CD8-positive, alpha-beta T cell (primary cell): ENCODE measurements at regions of chrX and their contacts with region 1.

Region 1: GRCh38 chrX:48911412-48912182 is at the start of gene SLC35A2:
- DNase-seq: peak; percentile 75 to 92 (median 89)
- ATAC-seq: peak; percentile 77
- H3K4me3 ChIP-seq: peak within 1 kb of the TSS; percentile 66 to 74
- H3K4me3 Mint-ChIP-seq: peak within 1 kb of the TSS; percentile 95
- H3K27ac ChIP-seq: peak within 1 kb of the TSS; percentile 89 to 92
- H3K27ac Mint-ChIP-seq: peak within 1 kb of the TSS; percentile 97
- H3K4me1 ChIP-seq: peaks cover 48% of the 10 kb centered on the region
- H3K4me1 Mint-ChIP-seq: peaks cover 51% of the 10 kb centered on the region
- H3K27me3 ChIP-seq: no peaks in the 10 kb centered on the region
- H3K27me3 Mint-ChIP-seq: no peaks in the 10 kb centered on the region
- CTCF ChIP-seq: no peak
- total RNA-seq, gene SLC35A2: 14.6 to 16.6 TPM

Region 2: GRCh38 chrX:48696301-48697181 is 215.1 kb before region 1 on chrX and contains the start of gene SUV39H1:
- CTCF ChIA-PET with region 1: no interaction called
- POLR2A ChIA-PET with region 1: no interaction called
- intact Hi-C with region 1: loop called in 1 of 2 experiments (anchors 5 kb)
- DNase-seq: peak; percentile 67 to 94 (median 79)
- ATAC-seq: peak; percentile 93
- H3K4me3 ChIP-seq: peak within 1 kb of the TSS; percentile 63 to 72
- H3K4me3 Mint-ChIP-seq: peak within 1 kb of the TSS; percentile 89
- H3K27ac ChIP-seq: peak within 1 kb of the TSS; percentile 85 to 87
- H3K27ac Mint-ChIP-seq: peak within 1 kb of the TSS; percentile 98
- H3K4me1 ChIP-seq: peaks cover 15% of the 10 kb centered on the region
- H3K4me1 Mint-ChIP-seq: peaks cover 27% of the 10 kb centered on the region
- H3K27me3 ChIP-seq: no peaks in the 10 kb centered on the region
- H3K27me3 Mint-ChIP-seq: no peaks in the 10 kb centered on the region
- CTCF ChIP-seq: no peak
- total RNA-seq, gene SUV39H1: 8.2 to 8.6 TPM

Region 3: DNA sequence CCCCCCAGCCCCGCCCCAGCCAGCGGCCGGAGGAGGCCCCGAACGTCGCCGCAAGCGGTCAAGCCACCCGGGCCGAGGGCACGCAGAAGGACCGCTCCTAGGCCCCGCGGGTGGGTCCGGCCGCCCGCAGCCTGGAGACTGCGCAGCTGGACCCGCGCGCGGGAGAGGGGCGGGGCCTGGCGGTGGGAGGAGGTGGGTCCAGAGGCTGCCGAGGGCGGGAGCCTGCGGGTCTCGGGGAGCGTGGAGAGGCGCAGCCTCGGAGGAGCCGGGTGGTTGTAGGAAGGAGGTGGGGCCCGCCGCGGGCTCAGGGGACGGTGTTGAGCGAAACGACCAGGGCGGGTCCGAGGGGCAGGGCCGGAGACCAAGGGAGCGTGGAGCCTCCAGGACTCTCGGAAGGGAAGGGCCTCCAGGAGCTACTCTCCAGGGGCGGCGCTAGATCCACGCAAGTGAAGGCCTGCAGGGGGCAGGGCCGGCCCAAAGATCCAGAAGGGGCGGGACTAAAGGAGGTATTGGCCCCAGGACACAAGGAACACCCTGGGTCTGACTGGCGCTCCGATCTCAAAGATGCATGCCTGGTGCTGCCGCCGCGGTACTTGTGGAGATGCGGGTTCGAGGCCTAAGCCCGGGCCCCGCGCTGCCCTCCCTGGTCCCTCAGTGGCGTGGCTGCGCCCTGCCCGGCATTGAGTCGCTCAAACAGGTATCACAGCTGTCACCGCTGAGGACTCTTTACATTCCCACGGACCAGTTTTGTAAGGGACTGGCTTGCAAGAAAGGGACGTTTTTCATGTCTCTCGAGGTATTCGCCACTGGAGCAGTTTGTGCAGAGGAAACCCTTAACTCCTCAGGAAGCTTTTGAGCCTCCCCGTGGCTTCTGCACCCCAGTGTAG is 20.0 kb before region 1 on chrX:
- CTCF ChIA-PET with region 1: interaction called, 5 read pairs
- POLR2A ChIA-PET with region 1: interaction called, 10 read pairs
- intact Hi-C with region 1: loop called in 1 of 2 experiments (anchors 1 kb)
- DNase-seq: peak; percentile 46 to 88 (median 75)
- ATAC-seq: peak; percentile 87
- H3K4me3 ChIP-seq: peak overlapping the region; percentile 56 to 59
- H3K4me3 Mint-ChIP-seq: peak overlapping the region; percentile 89
- H3K27ac ChIP-seq: peak overlapping the region; percentile 31 to 40
- H3K27ac Mint-ChIP-seq: peak overlapping the region; percentile 27
- H3K4me1 ChIP-seq: peaks cover 14% of the 10 kb centered on the region
- H3K4me1 Mint-ChIP-seq: peaks cover 29% of the 10 kb centered on the region
- H3K27me3 ChIP-seq: no peaks in the 10 kb centered on the region
- H3K27me3 Mint-ChIP-seq: no peaks in the 10 kb centered on the region
- CTCF ChIP-seq: peak; percentile 51

Region 4: GRCh38 chrX:48937054-48937907 is 25.7 kb after region 1 on chrX:
- CTCF ChIA-PET with region 1: interaction called, 7 read pairs
- POLR2A ChIA-PET with region 1: interaction called, 28 read pairs
- intact Hi-C with region 1: no loop called
- DNase-seq: peak; percentile 79 to 95 (median 89)
- ATAC-seq: peak; percentile 67
- H3K4me3 ChIP-seq: peak overlapping the region; percentile 33 to 45
- H3K4me3 Mint-ChIP-seq: peak overlapping the region; percentile 83
- H3K27ac ChIP-seq: peak overlapping the region; percentile 82 to 89
- H3K27ac Mint-ChIP-seq: peak overlapping the region; percentile 99
- H3K4me1 ChIP-seq: peaks cover 81% of the 10 kb centered on the region
- H3K4me1 Mint-ChIP-seq: peaks cover 76% of the 10 kb centered on the region
- H3K27me3 ChIP-seq: no peaks in the 10 kb centered on the region
- H3K27me3 Mint-ChIP-seq: no peaks in the 10 kb centered on the region
- CTCF ChIP-seq: no peak

Region 5: GRCh38 chrX:48945516-48946348 is 34.1 kb after region 1 on chrX:
- CTCF ChIA-PET with region 1: interaction called, 8 read pairs
- POLR2A ChIA-PET with region 1: interaction called, 28 read pairs
- intact Hi-C with region 1: loop called in 1 of 2 experiments (anchors 5 kb)
- DNase-seq: peak in 8 of 9 experiments; percentile 10 to 78 (median 62)
- ATAC-seq: peak; percentile 70
- H3K4me3 ChIP-seq: no peak overlapping the region
- H3K4me3 Mint-ChIP-seq: peak overlapping the region; percentile 11
- H3K27ac ChIP-seq: no peak overlapping the region
- H3K27ac Mint-ChIP-seq: peak overlapping the region; percentile 67
- H3K4me1 ChIP-seq: peaks cover 52% of the 10 kb centered on the region
- H3K4me1 Mint-ChIP-seq: peaks cover 45% of the 10 kb centered on the region
- H3K27me3 ChIP-seq: no peaks in the 10 kb centered on the region
- H3K27me3 Mint-ChIP-seq: no peaks in the 10 kb centered on the region
- CTCF ChIP-seq: peak; percentile 68